BJ (cell line): ENCODE measurements at regions of chr10 and their contacts with region 1.

Region 1: GRCh38 chr10:58064714-58065528 is 202.8 kb downstream of the IPMK start:
- DNase-seq: no peak
- H3K4me3 ChIP-seq: no peak overlapping the region
- H3K27me3 ChIP-seq: peaks cover 5% of the 10 kb centered on the region
- CTCF ChIP-seq: peak; percentile 85

Region 2: DNA sequence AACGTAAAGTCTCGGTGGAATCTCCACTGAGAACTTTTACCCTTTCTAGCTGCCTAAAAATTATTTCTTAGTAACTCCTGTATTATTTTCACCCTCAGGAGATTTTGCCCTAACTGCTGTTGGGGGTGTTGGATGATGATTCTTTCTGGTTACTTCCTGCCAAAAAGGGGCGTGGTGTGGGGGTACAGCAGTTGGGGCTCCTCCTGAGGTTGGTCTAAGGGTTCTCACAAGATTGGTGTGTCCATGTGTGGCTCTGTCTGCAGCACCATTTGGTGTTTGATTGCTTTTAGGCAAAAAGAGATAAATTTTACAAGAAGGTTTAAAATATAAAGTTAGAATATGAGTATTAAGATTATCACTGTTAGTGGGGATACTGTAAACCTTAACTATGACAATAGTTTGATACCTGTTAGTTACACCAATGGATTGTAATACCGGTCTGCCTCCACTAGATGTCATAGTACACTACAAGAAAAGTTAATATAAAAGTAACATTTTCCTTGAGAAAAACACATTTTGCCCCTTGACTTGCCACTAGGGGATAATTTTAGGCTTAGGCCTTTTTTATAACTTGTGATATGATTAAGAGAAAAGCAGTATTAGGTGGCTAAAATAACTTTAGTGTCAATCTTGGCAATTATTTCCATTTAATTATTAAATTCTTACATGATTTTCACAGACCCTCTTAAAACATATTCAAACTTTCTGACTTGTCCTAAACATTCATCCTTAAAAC is 725.9 kb before region 1 on chr10:
- CTCF ChIA-PET with region 1: interaction called, 10 read pairs
- POLR2A ChIA-PET with region 1: no interaction called
- DNase-seq: peak; percentile 5
- H3K4me3 ChIP-seq: no peak overlapping the region
- H3K27me3 ChIP-seq: no peaks in the 10 kb centered on the region
- CTCF ChIP-seq: peak; percentile 61

Region 3: DNA sequence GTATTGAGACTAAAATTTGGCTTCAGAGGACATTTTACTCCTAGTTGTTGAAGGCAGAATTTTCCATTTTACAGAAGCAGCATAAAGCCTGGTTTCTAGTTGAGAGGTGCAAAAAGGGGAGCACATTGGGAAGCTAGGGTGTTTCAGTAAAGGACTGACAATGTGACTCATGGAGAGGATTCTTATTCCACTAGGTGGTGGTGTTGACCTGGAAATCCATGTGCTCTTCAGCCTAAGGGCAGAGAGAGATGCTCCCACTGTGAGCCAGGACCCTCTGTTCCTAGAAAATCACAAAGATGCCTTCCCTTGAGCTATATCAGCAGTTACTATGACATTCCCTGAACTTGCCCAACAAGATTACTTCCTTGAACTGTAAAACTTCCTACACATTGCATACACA is 485.0 kb before region 1 on chr10:
- CTCF ChIA-PET with region 1: interaction called, 20 read pairs
- POLR2A ChIA-PET with region 1: no interaction called
- DNase-seq: no peak
- H3K4me3 ChIP-seq: no peak overlapping the region
- H3K27me3 ChIP-seq: no peaks in the 10 kb centered on the region
- CTCF ChIP-seq: peak; percentile 33; the same call in 1 of the 2 replicates

Region 4: DNA sequence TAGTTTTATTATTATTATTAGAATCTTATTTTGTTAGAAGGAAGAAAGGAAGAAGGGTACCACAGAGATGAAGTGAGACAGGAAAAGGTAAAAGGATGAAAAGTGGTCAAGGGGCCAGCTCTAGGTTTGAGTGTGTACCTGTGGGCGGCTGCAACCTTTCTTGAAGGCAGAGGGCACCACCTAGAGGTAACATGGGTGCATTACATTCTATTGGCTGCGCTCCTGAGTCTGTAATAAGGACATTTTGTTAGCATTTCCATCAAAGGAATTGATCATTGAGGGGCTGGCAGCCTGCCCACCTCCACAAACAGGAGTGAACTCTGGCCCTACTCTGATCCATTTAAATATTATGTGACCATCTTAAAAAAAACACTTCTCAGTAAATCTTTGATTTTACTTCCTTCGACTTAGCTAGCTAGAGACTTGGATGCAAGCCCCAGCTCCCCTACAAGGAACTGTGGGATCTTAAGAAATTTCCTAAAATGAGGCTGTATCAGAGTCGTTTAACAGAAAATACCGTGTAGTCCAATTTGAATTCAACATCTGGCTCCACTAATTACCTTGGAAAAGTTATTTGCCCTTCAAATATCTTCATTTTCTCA is 407.7 kb before region 1 on chr10:
- CTCF ChIA-PET with region 1: interaction called, 14 read pairs
- POLR2A ChIA-PET with region 1: no interaction called
- DNase-seq: no peak
- H3K4me3 ChIP-seq: no peak overlapping the region
- H3K27me3 ChIP-seq: 0 out of 2 replicates have a peak, but pooled peaks cover 4% of the 10 kb centered on the region
- CTCF ChIP-seq: peak; percentile 88

Region 5: GRCh38 chr10:57716886-57717285 is 348.0 kb before region 1 on chr10:
- CTCF ChIA-PET with region 1: interaction called, 15 read pairs
- POLR2A ChIA-PET with region 1: no interaction called
- DNase-seq: no peak
- H3K4me3 ChIP-seq: no peak overlapping the region
- H3K27me3 ChIP-seq: no peaks in the 10 kb centered on the region
- CTCF ChIP-seq: peak; percentile 57